Activated CD4-positive, alpha-beta T cell treated with anti-CD3 and anti-CD28 coated beads for 36 hours (primary cell): ENCODE measurements at regions of chr1 and their contacts with region 1.

Region 1: GRCh38 chr1:15656464-15656863 is 27.7 kb upstream of the PLEKHM2 start:
- DNase-seq: no peak
- ATAC-seq: no peak
- H3K4me3 Mint-ChIP-seq: no peak overlapping the region
- H3K27ac Mint-ChIP-seq: no peak overlapping the region
- H3K4me1 Mint-ChIP-seq: no peaks in the 10 kb centered on the region
- H3K27me3 Mint-ChIP-seq: no peaks in the 10 kb centered on the region

Region 2: DNA sequence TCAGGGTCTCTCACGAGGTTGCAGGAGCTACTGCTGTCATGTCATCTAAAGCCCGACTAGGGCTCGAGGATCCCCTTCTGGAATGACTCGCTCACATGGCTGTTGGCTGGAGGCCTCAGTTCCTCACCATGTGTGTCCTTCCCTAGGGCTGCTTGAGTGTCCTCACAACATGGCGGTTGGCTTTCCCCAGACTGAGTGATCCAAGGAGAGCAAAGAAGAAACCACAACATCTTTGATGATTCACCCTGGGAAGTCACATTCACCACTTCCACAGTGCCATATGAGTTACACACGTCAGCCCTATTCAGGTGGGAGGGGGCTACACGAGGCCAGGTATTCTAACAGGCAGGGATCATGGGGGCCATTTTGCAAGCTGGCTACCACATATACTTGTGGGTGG is 344.6 kb before region 1 on chr1:
- CTCF ChIA-PET with region 1: no interaction called
- POLR2A ChIA-PET with region 1: no interaction called
- intact Hi-C with region 1: no loop called
- DNase-seq: peak; percentile 10
- ATAC-seq: peak; percentile 49
- H3K4me3 Mint-ChIP-seq: no peak overlapping the region
- H3K27ac Mint-ChIP-seq: no peak overlapping the region
- H3K4me1 Mint-ChIP-seq: no peaks in the 10 kb centered on the region
- H3K27me3 Mint-ChIP-seq: no peaks in the 10 kb centered on the region

Region 3: DNA sequence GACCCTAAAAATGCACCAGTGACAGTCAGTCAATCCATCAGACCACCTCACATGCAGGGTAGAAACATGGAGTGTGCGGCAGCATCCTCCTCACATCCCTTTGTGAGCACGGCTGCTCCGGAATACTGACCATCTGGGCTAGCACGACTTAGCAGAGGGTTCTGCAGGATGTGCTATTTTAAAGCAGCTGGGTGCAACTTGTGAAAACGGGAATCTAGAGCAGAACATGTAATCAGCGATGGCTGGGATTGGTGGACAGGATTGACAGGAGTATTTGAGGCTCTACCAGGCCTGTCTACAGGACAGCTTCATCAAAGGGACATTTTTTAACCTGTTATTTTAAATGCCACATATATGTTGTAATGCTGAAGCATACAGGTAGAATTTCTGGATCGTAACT is 10.9 kb after region 1 on chr1:
- CTCF ChIA-PET with region 1: interaction called, 11 read pairs
- POLR2A ChIA-PET with region 1: interaction called, 3 read pairs
- intact Hi-C with region 1: no loop called
- DNase-seq: no peak
- ATAC-seq: no peak
- H3K4me3 Mint-ChIP-seq: no peak overlapping the region
- H3K27ac Mint-ChIP-seq: no peak overlapping the region
- H3K4me1 Mint-ChIP-seq: no peaks in the 10 kb centered on the region
- H3K27me3 Mint-ChIP-seq: no peaks in the 10 kb centered on the region